ENCODE measurements at regions of chr1 and their contacts with region 1.

Region 1: GRCh38 chr1:109877320-109877771 is 33.3 kb upstream of the CSF1 start:
- DNase-seq: peak; percentile 87
- H3K4me3 Mint-ChIP-seq: peak overlapping the region; percentile 29
- H3K27ac Mint-ChIP-seq: peak overlapping the region; percentile 96
- H3K4me1 Mint-ChIP-seq: peaks cover 37% of the 10 kb centered on the region
- H3K27me3 Mint-ChIP-seq: no peaks in the 10 kb centered on the region
- CTCF ChIP-seq: peak; percentile 21

Region 2: DNA sequence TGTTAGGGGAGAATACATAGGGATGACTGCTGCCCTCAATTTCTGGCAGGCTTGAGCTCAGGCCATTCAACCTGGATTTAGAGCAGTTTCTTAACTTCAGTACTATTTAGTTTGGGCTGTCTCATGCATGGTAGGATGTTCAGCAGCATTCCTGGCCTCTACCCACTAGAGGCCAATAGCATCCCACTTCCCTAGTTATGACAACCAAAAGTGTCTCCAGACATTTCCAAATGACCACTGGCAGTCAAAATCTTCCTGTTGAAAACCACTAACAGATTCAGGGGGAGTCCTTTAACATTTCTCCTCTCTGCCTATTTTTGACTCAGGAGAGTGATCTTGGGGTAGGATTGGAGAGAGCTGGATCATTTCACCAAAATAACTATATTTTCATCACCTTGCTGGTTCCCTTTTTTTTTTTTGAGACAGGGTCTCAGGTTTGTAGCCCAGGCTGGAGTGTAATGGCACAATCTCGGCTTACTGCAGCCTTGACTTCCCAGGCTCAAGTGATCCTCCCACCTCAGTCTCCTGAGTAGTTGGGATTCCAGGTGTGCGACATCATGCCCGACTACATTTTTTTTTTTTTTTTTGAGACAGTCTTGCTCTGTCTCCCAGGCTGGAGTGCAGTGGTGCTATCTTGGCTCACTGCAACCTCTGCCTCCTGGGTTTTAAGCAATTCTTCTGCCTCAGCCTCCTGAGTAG is 266.6 kb before region 1 on chr1:
- CTCF ChIA-PET with region 1: no interaction called
- POLR2A ChIA-PET with region 1: no interaction called
- intact Hi-C with region 1: no loop called
- DNase-seq: no peak
- H3K4me3 Mint-ChIP-seq: no peak overlapping the region
- H3K27ac Mint-ChIP-seq: no peak overlapping the region
- H3K4me1 Mint-ChIP-seq: no peaks in the 10 kb centered on the region
- H3K27me3 Mint-ChIP-seq: no peaks in the 10 kb centered on the region
- CTCF ChIP-seq: no peak

Region 3: DNA sequence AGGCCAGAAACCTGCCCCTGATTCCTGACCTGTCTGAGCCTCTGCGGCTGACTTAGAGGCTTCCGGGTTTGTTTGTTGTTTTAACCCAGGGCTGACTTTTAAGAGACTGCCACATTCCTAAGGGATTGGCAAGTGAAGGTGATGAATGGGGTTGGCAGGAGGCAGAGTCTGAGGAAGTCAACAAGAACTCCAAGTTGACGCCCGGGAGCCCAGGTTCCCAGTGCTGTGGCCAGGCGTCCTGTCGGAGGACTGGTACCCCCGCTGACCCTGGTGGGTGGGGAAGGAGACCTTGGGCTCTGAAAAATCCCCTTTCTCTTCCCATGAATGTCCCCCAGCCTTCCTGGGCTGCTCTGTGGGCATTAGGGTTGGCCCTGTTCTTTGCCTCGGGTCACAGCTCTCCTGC is 93.9 kb before region 1 on chr1:
- CTCF ChIA-PET with region 1: no interaction called
- POLR2A ChIA-PET with region 1: interaction called, 4 read pairs
- intact Hi-C with region 1: loop called (anchors 2 kb)
- DNase-seq: peak; percentile 91
- H3K4me3 Mint-ChIP-seq: no peak overlapping the region
- H3K27ac Mint-ChIP-seq: peak overlapping the region; percentile 81
- H3K4me1 Mint-ChIP-seq: peaks cover 31% of the 10 kb centered on the region
- H3K27me3 Mint-ChIP-seq: no peaks in the 10 kb centered on the region
- CTCF ChIP-seq: no peak

Region 4: DNA sequence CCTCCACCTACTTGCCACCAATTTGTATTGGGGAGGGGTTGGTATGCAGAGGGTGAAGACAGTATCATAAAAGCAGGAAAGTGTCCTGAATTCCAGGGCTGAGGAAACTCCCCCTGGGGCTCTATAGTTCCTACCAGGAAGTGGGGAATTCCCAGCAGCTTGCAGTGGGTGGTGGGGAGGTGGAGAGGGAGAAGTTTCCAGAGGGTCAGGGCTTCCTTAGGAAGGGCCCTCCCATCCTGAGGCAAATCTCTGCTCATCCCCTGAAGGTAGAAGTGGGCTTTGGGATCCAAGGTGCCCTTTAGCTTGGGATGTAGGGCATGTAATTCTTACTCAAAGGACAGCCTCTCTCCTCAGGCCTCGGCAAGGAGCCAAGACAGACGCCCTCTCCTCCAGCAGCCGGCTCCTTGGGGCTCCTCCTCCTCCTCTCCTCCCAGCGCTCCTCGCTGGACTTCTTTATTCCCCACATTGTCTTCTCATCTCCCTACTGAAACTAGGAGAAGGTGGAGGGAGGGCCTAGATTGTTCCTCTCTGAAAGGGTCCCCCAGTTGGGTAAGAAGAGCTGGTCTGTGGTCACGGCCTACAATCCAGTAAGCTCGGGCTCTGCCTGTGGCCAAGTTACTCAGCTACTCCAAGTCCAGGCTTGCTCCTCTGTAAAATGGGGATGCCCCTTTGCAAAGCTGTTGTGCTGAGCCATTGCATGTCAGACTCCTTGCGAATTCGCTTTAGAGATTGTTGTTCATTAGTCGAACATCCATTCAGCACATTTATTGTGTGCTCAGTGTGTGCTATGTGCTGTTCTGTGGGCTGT is 15.4 kb after region 1 on chr1:
- CTCF ChIA-PET with region 1: no interaction called
- POLR2A ChIA-PET with region 1: interaction called, 7 read pairs
- intact Hi-C with region 1: loop called (anchors 2 kb)
- DNase-seq: peak; percentile 90
- H3K4me3 Mint-ChIP-seq: no peak overlapping the region
- H3K27ac Mint-ChIP-seq: no peak overlapping the region
- H3K4me1 Mint-ChIP-seq: peaks cover 18% of the 10 kb centered on the region
- H3K27me3 Mint-ChIP-seq: no peaks in the 10 kb centered on the region
- CTCF ChIP-seq: no peak

Region 5: GRCh38 chr1:109910123-109910962 is 33.0 kb after region 1 on chr1 and contains the start of gene CSF1:
- CTCF ChIA-PET with region 1: no interaction called
- POLR2A ChIA-PET with region 1: interaction called, 4 read pairs
- intact Hi-C with region 1: loop called (anchors 2 kb)
- DNase-seq: peak; percentile 72
- H3K4me3 Mint-ChIP-seq: peak within 1 kb of the TSS; percentile 73
- H3K27ac Mint-ChIP-seq: peak within 1 kb of the TSS; percentile 74
- H3K4me1 Mint-ChIP-seq: peaks cover 25% of the 10 kb centered on the region
- H3K27me3 Mint-ChIP-seq: no peaks in the 10 kb centered on the region
- CTCF ChIP-seq: no peak
- total RNA-seq, gene CSF1: 6.3 and 11.7 TPM in 2 replicates

Measured in MCF 10A (cell line).